ENCODE measurements at regions of chr17 and their contacts with region 1.

Region 1: GRCh38 chr17:61002316-61002736 is 324.7 kb downstream of the BCAS3 start:
- DNase-seq: no peak
- ATAC-seq: no peak
- H3K4me3 Mint-ChIP-seq: no peak overlapping the region
- H3K27ac Mint-ChIP-seq: no peak overlapping the region
- H3K4me1 Mint-ChIP-seq: no peaks in the 10 kb centered on the region
- H3K27me3 Mint-ChIP-seq: no peaks in the 10 kb centered on the region
- CTCF ChIP-seq: peak; percentile 35

Region 2: GRCh38 chr17:61349350-61349749 is 347.0 kb after region 1 on chr17:
- CTCF ChIA-PET with region 1: interaction called, 4 read pairs
- POLR2A ChIA-PET with region 1: no interaction called
- intact Hi-C with region 1: loop called (anchors 1 kb)
- DNase-seq: no peak
- ATAC-seq: no peak
- H3K4me3 Mint-ChIP-seq: no peak overlapping the region
- H3K27ac Mint-ChIP-seq: no peak overlapping the region
- H3K4me1 Mint-ChIP-seq: no peaks in the 10 kb centered on the region
- H3K27me3 Mint-ChIP-seq: no peaks in the 10 kb centered on the region
- CTCF ChIP-seq: no peak

Region 3: DNA sequence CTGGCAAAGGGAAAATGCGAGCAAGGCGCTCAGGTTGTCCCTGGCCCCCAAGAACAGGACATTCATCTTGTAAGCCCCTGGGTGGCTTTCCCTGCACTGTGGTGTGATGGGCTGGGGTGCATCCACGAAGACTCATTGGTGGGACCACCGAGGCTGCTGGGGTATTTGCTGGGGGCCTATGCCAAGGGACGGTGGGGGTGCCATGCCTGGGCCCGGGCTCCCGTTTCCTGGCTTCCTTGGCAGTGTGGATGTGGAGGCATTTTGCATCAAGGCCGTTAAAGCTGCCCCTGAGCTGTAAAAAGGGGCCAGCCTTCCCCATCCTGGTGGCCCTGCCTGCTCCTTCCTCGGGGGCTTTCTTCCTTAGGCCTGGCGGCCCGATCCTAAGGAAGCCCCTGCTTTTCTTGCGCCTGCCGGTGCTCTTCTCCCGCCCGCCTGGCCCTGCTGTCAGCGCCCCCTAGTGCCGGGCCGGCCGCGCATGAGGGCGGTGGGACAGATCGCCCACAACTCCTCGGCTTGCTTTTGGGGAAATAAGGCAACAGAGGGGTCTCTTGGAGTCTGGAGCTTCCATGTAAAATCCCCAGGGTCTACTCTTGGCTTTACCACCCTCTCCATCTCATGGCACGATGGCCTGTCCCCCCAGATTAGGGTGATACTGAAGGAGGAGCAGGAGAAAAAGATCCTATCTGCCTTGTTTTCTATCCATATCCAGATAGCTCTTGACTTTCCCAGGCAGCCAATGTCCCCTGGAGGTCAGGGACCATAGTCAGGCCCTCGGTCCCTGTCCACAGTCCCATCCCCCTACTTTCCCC is 387.5 kb after region 1 on chr17:
- CTCF ChIA-PET with region 1: no interaction called
- POLR2A ChIA-PET with region 1: no interaction called
- intact Hi-C with region 1: loop called (anchors 1 kb)
- DNase-seq: no peak
- ATAC-seq: peak; percentile 34
- H3K4me3 Mint-ChIP-seq: no peak overlapping the region
- H3K27ac Mint-ChIP-seq: no peak overlapping the region
- H3K4me1 Mint-ChIP-seq: peaks cover 2% of the 10 kb centered on the region
- H3K27me3 Mint-ChIP-seq: peaks cover 19% of the 10 kb centered on the region
- CTCF ChIP-seq: no peak

Measured in activated B cell treated with CpG ODN at 0.5 μM for 24 hours (primary cell).